ENCODE measurements at regions of chr2 and their contacts with region 1.

Region 1: GRCh38 chr2:63639344-63639743 is 50.6 kb downstream of the MDH1 start:
- DNase-seq: no peak
- ATAC-seq: no peak
- H3K4me3 ChIP-seq: no peak overlapping the region
- H3K27ac ChIP-seq: no peak overlapping the region
- H3K4me1 ChIP-seq: no peaks in the 10 kb centered on the region
- H3K27me3 ChIP-seq: no peaks in the 10 kb centered on the region; a peak in 1 of 5 replicates
- CTCF ChIP-seq: no peak
- EP300 ChIP-seq: no peak
- POLR2A ChIP-seq: no peak
- RAD21 ChIP-seq: no peak

Region 2: DNA sequence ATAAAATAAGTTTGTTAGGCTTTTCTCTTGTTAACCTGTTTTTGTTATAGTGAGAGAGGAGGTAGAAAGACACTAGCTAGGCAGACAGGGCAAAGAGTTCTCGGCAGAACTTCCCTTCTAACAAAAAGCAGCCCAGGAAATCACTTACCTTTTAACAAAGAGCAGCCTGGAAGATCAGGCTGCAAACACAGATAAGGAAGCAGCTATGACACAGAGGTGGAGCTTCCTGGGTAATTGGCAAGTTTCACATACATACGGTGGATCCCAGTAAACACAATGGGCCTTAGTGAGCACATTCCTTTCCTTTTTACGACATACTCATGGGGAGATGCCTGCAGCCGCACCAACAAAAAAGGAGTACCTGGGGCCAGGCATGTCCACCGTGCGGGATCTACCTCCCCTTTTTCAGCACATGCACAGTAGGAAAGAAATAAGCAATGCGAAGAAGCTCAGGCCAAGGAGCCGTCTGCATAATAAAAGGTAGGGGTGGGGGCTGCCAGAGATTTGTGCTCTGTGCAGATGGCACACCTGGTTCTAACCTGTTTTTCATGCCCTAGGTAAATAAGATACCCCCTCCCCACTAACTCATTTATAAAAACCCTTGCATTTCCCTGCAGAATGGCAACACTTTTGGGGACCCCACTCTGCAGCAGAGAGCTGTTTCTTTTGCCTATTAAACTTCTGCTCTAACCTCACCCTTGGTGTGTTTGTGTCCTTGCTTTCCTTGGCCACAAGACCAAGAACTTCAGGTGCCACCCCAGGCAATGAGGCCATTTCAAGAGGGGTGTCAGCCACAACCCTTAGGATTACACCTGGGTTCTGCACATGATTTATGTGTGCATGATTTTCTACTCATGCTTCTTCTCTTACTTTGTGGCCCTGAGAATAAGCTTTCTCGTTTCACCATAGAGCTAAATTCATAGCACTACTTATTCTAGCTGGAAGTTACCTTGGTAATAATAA is 24.1 kb before region 1 on chr2:
- CTCF ChIA-PET with region 1: no interaction called
- POLR2A ChIA-PET with region 1: no interaction called
- in situ Hi-C with region 1: no loop called
- intact Hi-C with region 1: loop called (anchors 1 kb)
- DNase-seq: peak; percentile 86
- ATAC-seq: peak; percentile 97
- H3K4me3 ChIP-seq: peak overlapping the region; percentile 2 to 53 (median 41)
- H3K27ac ChIP-seq: no peak overlapping the region
- H3K4me1 ChIP-seq: peaks cover 20% of the 10 kb centered on the region
- H3K27me3 ChIP-seq: peaks cover 1 to 4% of the 10 kb centered on the region in 2 experiments; a peak in 1 of 5 replicates
- CTCF ChIP-seq: no peak
- EP300 ChIP-seq: no peak
- POLR2A ChIP-seq: no peak
- RAD21 ChIP-seq: no peak